Esophagus muscularis mucosa (tissue), 4 donors: ENCODE measurements at regions of chr13 and their contacts with region 1.

Region 1: GRCh38 chr13:19959831-19960652 is 1.5 kb downstream of the ZMYM2 start:
- DNase-seq: no peak
- H3K4me3 ChIP-seq: peak overlapping the region; percentile 70 to 84 (median 73)
- H3K27ac ChIP-seq: peak overlapping the region; percentile 97 to 99 (median 98)
- H3K4me1 ChIP-seq: peaks cover 42 to 63% (median 60%) of the 10 kb centered on the region in 4 donors
- H3K27me3 ChIP-seq: no peaks in the 10 kb centered on the region
- CTCF ChIP-seq: peak; percentile 90 to 94 (median 91)
- EP300 ChIP-seq: no peak
- POLR2A ChIP-seq: no peak

Region 2: GRCh38 chr13:19633479-19634255 is 326.4 kb before region 1 on chr13 and contains the start of gene MPHOSPH8:
- intact Hi-C with region 1: loop called (anchors 5 kb)
- DNase-seq: peak; percentile 99
- H3K4me3 ChIP-seq: peak within 1 kb of the TSS; percentile 73 to 91 (median 84)
- H3K27ac ChIP-seq: peak within 1 kb of the TSS; percentile 92 to 96 (median 94)
- H3K4me1 ChIP-seq: peaks cover 33 to 40% (median 36%) of the 10 kb centered on the region in 4 donors
- H3K27me3 ChIP-seq: no peaks in the 10 kb centered on the region
- CTCF ChIP-seq: peak in 1 of 3 experiments; percentile 9
- EP300 ChIP-seq: no peak
- POLR2A ChIP-seq: peak; percentile 45
- total RNA-seq, gene MPHOSPH8: 34.1 to 40.3 (median 39.0) TPM

Region 3: DNA sequence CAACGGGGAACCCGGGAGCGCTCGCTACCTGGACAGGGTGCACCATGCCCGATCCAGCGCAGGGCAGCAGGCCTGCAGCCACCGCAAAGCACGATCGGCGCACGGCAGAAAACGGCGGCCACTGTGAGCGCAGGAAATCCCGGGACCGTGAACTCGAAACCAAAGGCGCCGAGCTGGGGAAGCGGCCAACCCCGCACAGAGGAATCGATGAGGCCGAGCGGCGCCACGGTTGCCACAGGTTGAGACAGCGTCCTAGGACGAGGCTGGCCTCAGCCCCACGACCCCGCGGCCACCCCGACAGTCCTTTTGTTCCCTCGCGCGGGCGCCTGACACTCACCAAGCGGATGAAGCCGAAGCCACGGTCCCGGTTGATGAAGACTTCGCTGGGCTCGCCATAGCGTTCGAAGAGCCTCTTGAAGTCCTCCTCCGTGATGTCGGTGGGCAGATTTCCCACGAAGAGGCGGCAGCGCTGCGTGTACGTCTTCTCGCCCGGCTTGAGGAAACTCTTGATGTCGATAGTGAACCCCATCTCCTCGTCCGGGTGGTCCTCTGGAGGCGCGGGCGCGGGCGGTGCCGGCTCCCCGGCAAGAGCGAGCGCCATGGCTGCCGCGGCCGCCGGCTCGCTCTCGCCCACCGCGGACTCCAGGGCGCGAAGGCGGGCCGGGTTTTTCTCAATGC is 177.9 kb before region 1 on chr13:
- intact Hi-C with region 1: loop called (anchors 5 kb)
- DNase-seq: peak; percentile 92
- H3K4me3 ChIP-seq: peak overlapping the region; percentile 87 to 98 (median 93)
- H3K27ac ChIP-seq: peak overlapping the region; percentile 93 to 98 (median 96)
- H3K4me1 ChIP-seq: peaks cover 6 to 16% (median 13%) of the 10 kb centered on the region in 4 donors
- H3K27me3 ChIP-seq: no peaks in the 10 kb centered on the region
- CTCF ChIP-seq: no peak
- EP300 ChIP-seq: no peak
- POLR2A ChIP-seq: no peak

Region 4: GRCh38 chr13:19927117-19927748 is 32.8 kb before region 1 on chr13:
- intact Hi-C with region 1: loop called (anchors 5 kb)
- DNase-seq: no peak
- H3K4me3 ChIP-seq: no peak overlapping the region
- H3K27ac ChIP-seq: no peak overlapping the region
- H3K4me1 ChIP-seq: no peaks in the 10 kb centered on the region
- H3K27me3 ChIP-seq: no peaks in the 10 kb centered on the region
- CTCF ChIP-seq: peak; percentile 47 to 65 (median 53)
- EP300 ChIP-seq: no peak
- POLR2A ChIP-seq: no peak